ENCODE measurements at regions of chr1 and their contacts with region 1.

Region 1: GRCh38 chr1:46236882-46237281 is 10.7 kb upstream of the RAD54L start:
- DNase-seq: no peak
- H3K4me3 Mint-ChIP-seq: no peak overlapping the region
- H3K27ac Mint-ChIP-seq: no peak overlapping the region
- H3K4me1 Mint-ChIP-seq: peaks cover 3% of the 10 kb centered on the region
- H3K27me3 Mint-ChIP-seq: no peaks in the 10 kb centered on the region

Region 2: DNA sequence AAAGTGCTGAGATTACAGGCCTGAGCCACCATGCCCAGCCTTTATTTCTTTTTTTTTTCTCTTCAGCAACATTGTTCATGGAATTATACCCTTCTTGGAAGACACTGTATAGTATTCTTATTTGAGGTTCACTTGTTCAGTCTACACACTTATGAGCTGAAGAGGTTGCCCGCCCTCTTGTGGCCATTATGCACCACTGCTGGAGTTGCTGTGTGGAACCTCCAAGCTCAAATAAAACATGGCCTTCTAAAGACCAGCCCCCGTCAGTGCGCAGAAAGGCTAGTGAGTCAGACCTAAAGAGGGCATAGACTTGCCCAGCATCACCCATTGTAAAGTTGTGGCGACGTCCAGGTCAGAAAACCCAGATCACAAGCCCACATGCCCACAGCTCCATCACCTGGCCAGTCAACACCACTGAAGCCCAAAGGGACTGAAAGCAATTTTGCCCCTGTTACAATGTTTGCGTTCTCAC is 13.4 kb before region 1 on chr1:
- CTCF ChIA-PET with region 1: interaction called, 11 read pairs
- POLR2A ChIA-PET with region 1: no interaction called
- DNase-seq: peak; percentile 71
- H3K4me3 Mint-ChIP-seq: no peak overlapping the region
- H3K27ac Mint-ChIP-seq: no peak overlapping the region
- H3K4me1 Mint-ChIP-seq: peaks cover 4% of the 10 kb centered on the region
- H3K27me3 Mint-ChIP-seq: no peaks in the 10 kb centered on the region

Region 3: DNA sequence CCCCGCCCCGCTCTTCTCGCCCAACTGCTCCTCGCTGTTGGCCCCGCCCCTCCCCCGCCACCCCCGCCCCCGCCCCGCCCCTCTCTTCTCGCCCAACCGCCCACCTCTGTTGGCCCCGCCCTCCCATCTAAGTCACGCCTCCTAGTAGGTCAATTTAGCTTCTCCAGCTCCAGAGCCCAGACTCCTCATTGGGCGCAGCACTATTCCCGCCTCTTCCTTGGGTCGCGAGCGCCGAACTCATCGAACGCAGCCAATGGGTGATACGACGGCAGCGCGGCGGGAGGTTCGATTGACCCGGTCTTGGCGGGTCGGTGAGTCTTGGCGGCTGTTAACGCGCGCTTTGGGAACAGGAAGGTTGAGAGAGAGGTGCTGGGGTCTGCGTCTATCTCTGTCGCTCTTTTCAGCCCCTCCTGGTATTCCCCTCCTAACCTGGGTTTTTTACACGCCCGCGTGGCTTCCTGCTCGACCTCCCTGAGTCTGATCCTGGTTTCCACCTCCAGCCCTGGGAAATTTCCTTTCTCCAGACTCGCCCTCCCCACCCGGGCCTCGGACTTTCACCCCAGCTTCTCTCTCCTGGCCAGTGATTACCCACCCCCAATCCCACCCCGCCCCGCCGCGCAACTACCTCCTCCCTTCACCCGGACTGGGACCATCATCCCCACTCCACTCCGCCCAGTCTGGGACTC is 10.7 kb after region 1 on chr1 and contains the start of gene RAD54L:
- CTCF ChIA-PET with region 1: interaction called, 13 read pairs
- POLR2A ChIA-PET with region 1: no interaction called
- DNase-seq: peak; percentile 98
- H3K4me3 Mint-ChIP-seq: peak within 1 kb of the TSS; percentile 99
- H3K27ac Mint-ChIP-seq: peak within 1 kb of the TSS; percentile 98
- H3K4me1 Mint-ChIP-seq: peaks cover 54% of the 10 kb centered on the region
- H3K27me3 Mint-ChIP-seq: no peaks in the 10 kb centered on the region
- total RNA-seq, gene RAD54L: 46.7 to 54.0 TPM

Measured in activated CD4-positive, alpha-beta T cell treated with anti-CD3 and anti-CD28 coated beads, Interleukin-2, amount 10 ng/mL, durations not matched to agents 7 days and 5 days (primary cell).